ENCODE measurements at regions of chr9 and their contacts with region 1.

Region 1: GRCh38 chr9:6272229-6272598 is 56.0 kb upstream of the TPD52L3 start:
- DNase-seq: peak in 2 of 5 donors; percentile 10 to 23
- ATAC-seq: peak; percentile 83 to 98 (median 96)
- H3K4me3 ChIP-seq: no peak overlapping the region
- H3K27ac ChIP-seq: peak overlapping the region in 9 of 12 donors; percentile 11 to 79 (median 63)
- H3K4me1 ChIP-seq: peaks cover 0 to 11% (median 0%) of the 10 kb centered on the region in 12 donors
- H3K27me3 ChIP-seq: no peaks in the 10 kb centered on the region
- CTCF ChIP-seq: no peak
- POLR2A ChIP-seq: no peak

Region 2: GRCh38 chr9:5863092-5863746 is 409.0 kb before region 1 on chr9:
- intact Hi-C with region 1: no loop called
- DNase-seq: peak in 3 of 5 donors; percentile 32 to 47 (median 40)
- ATAC-seq: peak; percentile 85 to 90 (median 88)
- H3K4me3 ChIP-seq: no peak overlapping the region
- H3K27ac ChIP-seq: no peak overlapping the region
- H3K4me1 ChIP-seq: peaks cover 0 to 7% (median 0%) of the 10 kb centered on the region in 12 donors
- H3K27me3 ChIP-seq: no peaks in the 10 kb centered on the region
- CTCF ChIP-seq: no peak
- POLR2A ChIP-seq: no peak

Region 3: DNA sequence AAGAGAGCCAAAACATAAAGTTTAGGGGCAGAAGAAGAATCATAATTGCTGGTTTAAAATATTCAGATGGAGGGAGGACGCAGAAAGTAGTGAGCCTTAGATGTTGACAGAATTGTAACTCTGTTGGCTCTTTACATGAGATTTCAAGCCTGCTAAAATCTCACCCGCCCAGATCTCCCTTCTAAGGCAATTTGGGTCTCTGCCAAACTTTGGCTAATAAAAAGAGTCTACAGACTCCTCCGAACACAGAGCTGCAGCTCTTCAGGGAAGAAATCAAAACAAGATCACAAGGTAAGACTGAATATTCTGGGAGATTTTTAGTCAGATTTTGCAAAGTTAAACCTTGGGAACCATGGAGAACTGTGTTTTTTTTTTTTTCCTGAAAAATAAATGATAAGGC is 56.7 kb before region 1 on chr9 and contains the start of gene IL33:
- intact Hi-C with region 1: loop called in 1 of 10 experiments (anchors 5 kb)
- DNase-seq: peak in 1 of 5 donors; percentile 47
- ATAC-seq: peak; percentile 59 to 81 (median 78)
- H3K4me3 ChIP-seq: peak within 1 kb of the TSS in 11 of 12 donors; percentile 3 to 63 (median 49)
- H3K27ac ChIP-seq: peak within 1 kb of the TSS in 11 of 12 donors; percentile 41 to 88 (median 74)
- H3K4me1 ChIP-seq: peaks cover 0 to 38% (median 3%) of the 10 kb centered on the region in 12 donors
- H3K27me3 ChIP-seq: no peaks in the 10 kb centered on the region
- CTCF ChIP-seq: no peak
- POLR2A ChIP-seq: peak in 1 of 2 donors; percentile 16
- total RNA-seq, gene IL33: 6.6 to 36.5 (median 12.7) TPM

Measured in heart left ventricle (tissue), 16 donors.